Cardiac septum (tissue), 1 donor: ENCODE measurements at regions of chr10 and their contacts with region 1.

Region 1: GRCh38 chr10:22849077-22849805 is 78.6 kb upstream of the ARMC3 start:
- DNase-seq: peak; percentile 85

Region 2: GRCh38 chr10:22714479-22715289 is 134.6 kb before region 1 on chr10 and contains the start of gene PIP4K2A:
- intact Hi-C with region 1: loop called (anchors 10 kb)
- DNase-seq: peak; percentile 92
- total RNA-seq, gene PIP4K2A: 20.0 TPM